Posterior vena cava (tissue), 2 donors: ENCODE measurements at regions of chr17 and their contacts with region 1.

Region 1: GRCh38 chr17:48878918-48879898 is 13.4 kb upstream of the ATP5MC1 start:
- DNase-seq: no peak

Region 2: GRCh38 chr17:48678141-48678971 is 200.9 kb before region 1 on chr17:
- intact Hi-C with region 1: loop called in 1 of 2 experiments (anchors 10 kb)
- DNase-seq: peak; percentile 87

Region 3: GRCh38 chr17:48724251-48725003 is 154.8 kb before region 1 on chr17:
- intact Hi-C with region 1: loop called (anchors 5 to 10 kb)
- DNase-seq: peak; percentile 96

Region 4: GRCh38 chr17:48804925-48805411 is 74.2 kb before region 1 on chr17:
- intact Hi-C with region 1: loop called (anchors 5 kb)
- DNase-seq: peak; percentile 85

Region 5: DNA sequence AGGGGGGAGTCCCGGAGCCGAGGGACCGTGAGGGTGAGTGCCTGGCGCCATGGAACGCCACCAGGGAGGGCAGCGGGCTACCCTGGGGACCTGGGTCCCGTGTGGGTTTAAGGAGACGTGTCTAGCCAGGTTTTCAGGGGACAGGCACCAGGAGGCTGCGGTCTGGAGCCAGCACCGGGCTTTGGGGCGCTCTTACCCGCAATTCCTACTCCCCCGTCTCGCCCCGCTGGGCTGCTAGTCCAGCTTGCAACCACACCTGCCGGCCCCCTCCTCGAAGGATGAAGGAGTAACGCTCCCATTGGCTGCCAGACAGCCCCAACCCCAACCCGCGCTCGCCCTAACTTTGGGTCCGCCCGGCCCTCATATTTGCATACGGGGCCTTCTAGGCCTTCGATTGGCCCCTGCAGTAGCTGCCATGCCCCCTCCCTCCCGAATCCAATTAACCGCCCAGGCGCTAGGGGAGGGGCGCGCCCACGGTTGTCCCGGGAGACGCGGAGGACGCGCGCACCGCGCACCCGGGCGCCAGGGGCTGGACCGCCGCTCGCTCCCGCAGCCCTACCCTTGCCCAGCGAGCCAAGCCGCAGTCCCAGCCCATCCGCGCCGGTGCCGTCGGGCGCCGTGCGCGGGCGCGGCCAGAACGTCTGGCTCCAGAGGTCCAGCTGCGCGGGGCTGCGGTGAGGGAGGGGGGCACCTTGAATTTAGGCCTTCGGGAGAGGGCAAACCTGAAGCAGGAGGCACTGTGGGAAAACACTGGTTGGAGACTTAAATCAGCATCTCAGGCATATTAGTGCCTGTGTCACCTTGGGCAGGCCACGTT is 62.2 kb before region 1 on chr17 and contains the start of gene TTLL6:
- intact Hi-C with region 1: loop called (anchors 5 kb)
- DNase-seq: peak; percentile 92
- total RNA-seq, gene TTLL6: 0.46 TPM in 1 of 2 donors, not detected in the other

Region 6: GRCh38 chr17:49031965-49032928 is 153.0 kb after region 1 on chr17:
- intact Hi-C with region 1: loop called in 1 of 2 experiments (anchors 10 kb)
- DNase-seq: no peak